ENCODE measurements at regions of chr12 and their contacts with region 1.

Region 1: GRCh38 chr12:11486623-11487444 is 91.5 kb upstream of the PRB2 start:
- DNase-seq: peak; percentile 66 to 71
- H3K4me3 ChIP-seq: no peak overlapping the region
- H3K27ac ChIP-seq: no peak overlapping the region
- H3K4me1 ChIP-seq: peaks cover 12% of the 10 kb centered on the region
- H3K27me3 ChIP-seq: no peaks in the 10 kb centered on the region
- CTCF ChIP-seq: peak; percentile 99

Region 2: GRCh38 chr12:11228296-11228879 is 258.4 kb before region 1 on chr12:
- CTCF ChIA-PET with region 1: interaction called, 4 read pairs
- POLR2A ChIA-PET with region 1: interaction called, 8 read pairs
- intact Hi-C with region 1: loop called (anchors 1 kb)
- DNase-seq: peak in 1 of 2 experiments; percentile 42
- H3K4me3 ChIP-seq: no peak overlapping the region
- H3K27ac ChIP-seq: no peak overlapping the region
- H3K4me1 ChIP-seq: no peaks in the 10 kb centered on the region
- H3K27me3 ChIP-seq: no peaks in the 10 kb centered on the region
- CTCF ChIP-seq: peak; percentile 72

Region 3: GRCh38 chr12:12081836-12082497 is 595.1 kb after region 1 on chr12:
- CTCF ChIA-PET with region 1: no interaction called
- POLR2A ChIA-PET with region 1: no interaction called
- intact Hi-C with region 1: no loop called
- DNase-seq: peak; percentile 24 to 40
- H3K4me3 ChIP-seq: no peak overlapping the region
- H3K27ac ChIP-seq: no peak overlapping the region
- H3K4me1 ChIP-seq: no peaks in the 10 kb centered on the region
- H3K27me3 ChIP-seq: no peaks in the 10 kb centered on the region
- CTCF ChIP-seq: no peak; the same call in 1 of the 2 replicates